Common myeloid progenitor, CD34-positive (primary cell): ENCODE measurements at regions of chr4 and their contacts with region 1.

Region 1: DNA sequence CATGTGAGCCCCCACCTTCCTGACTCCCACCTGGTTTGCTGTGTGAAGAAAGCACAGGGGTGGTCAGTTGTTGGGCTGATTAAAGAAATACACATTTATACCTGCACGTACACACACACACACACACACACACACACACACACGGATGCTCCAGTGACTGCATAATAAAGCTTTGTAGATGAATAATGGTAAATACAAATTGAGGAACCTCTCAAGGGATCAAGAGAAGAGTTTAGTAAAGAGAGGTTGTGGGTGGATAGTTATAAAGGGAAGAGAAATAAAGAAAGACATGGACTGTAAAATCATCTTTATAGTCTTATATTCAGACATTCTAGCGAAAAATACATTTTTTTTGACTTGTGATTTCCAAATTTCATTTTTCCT is 144.1 kb downstream of the MGST2 start:
- DNase-seq: peak in 2 of 3 donors; percentile 69 to 82
- H3K4me3 ChIP-seq: peak overlapping the region in 1 of 7 experiments; percentile 63
- H3K27ac ChIP-seq: peak overlapping the region in 1 of 2 experiments; percentile 27
- H3K4me1 ChIP-seq: peaks cover 6 to 39% (median 29%) of the 10 kb centered on the region in 4 experiments
- H3K27me3 ChIP-seq: no peaks in the 10 kb centered on the region

Region 2: DNA sequence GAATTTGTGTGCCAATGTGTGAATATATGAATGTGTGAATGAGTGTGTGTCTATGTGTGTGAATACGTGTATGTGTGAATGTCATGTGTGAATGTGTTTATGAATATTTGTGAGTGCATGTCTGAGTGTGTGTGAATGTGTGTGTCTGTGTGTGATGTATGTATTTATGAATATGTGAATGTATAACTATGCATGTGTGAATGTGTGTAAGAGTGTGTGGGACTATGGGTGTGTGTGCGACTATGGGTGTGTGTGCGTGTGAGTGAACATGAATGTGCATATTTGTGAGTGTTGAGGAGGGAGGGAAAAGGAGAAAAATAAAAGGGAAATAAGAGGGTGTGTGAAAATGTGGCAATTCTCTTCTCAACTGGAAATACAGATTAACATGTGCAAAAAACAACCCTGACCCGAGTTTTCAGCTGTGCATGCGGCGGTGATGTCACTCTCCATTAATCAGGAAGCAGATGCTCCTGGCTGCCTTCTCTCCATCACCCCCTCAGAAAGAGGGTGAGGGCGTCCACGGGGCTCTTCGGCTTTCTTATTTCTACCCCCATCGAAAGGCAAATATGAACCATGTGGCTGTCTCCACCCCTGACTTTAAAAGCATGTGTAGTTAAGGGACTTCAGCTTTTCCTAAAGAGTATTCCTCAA is 124.4 kb after region 1 on chr4:
- CTCF ChIA-PET with region 1: no interaction called
- POLR2A ChIA-PET with region 1: interaction called, 11 read pairs
- DNase-seq: peak in 2 of 3 donors; percentile 42 to 55
- H3K4me3 ChIP-seq: no peak overlapping the region
- H3K27ac ChIP-seq: no peak overlapping the region
- H3K4me1 ChIP-seq: no peaks in the 10 kb centered on the region
- H3K27me3 ChIP-seq: no peaks in the 10 kb centered on the region

Region 3: GRCh38 chr4:140047017-140047640 is 237.4 kb after region 1 on chr4:
- CTCF ChIA-PET with region 1: no interaction called
- POLR2A ChIA-PET with region 1: no interaction called
- DNase-seq: no peak
- H3K4me3 ChIP-seq: peak overlapping the region in 2 of 7 experiments; percentile 6 to 79
- H3K27ac ChIP-seq: peak overlapping the region; percentile 29 to 91
- H3K4me1 ChIP-seq: peaks cover 36 to 88% (median 84%) of the 10 kb centered on the region in 4 experiments
- H3K27me3 ChIP-seq: no peaks in the 10 kb centered on the region